Naive thymus-derived CD4-positive, alpha-beta T cell (primary cell): ENCODE measurements at regions of chr7 and their contacts with region 1.

Region 1: GRCh38 chr7:87876040-87876868 is at the starts of genes DBF4 and SLC25A40:
- DNase-seq: peak; percentile 88 to 98 (median 95)
- ATAC-seq: peak; percentile 95
- H3K4me3 ChIP-seq: peak within 1 kb of the TSS; percentile 93
- H3K4me3 Mint-ChIP-seq: peak within 1 kb of the TSS; percentile 69 to 96 (median 93)
- H3K27ac ChIP-seq: peak within 1 kb of the TSS; percentile 92
- H3K27ac Mint-ChIP-seq: peak within 1 kb of the TSS; percentile 82 to 98 (median 97)
- H3K4me1 ChIP-seq: peaks cover 6 to 13% of the 10 kb centered on the region in 2 donors
- H3K4me1 Mint-ChIP-seq: peaks cover 27 to 64% (median 54%) of the 10 kb centered on the region in 7 donors
- H3K27me3 ChIP-seq: no peaks in the 10 kb centered on the region
- H3K27me3 Mint-ChIP-seq: no peaks in the 10 kb centered on the region
- total RNA-seq, gene DBF4: 31.2 to 46.5 (median 38.4) TPM
- total RNA-seq, gene SLC25A40: 15.2 to 50.2 (median 27.5) TPM

Region 2: GRCh38 chr7:87219545-87220025 is 656.7 kb before region 1 on chr7 and contains the start of gene TMEM243:
- CTCF ChIA-PET with region 1: no interaction called
- POLR2A ChIA-PET with region 1: no interaction called
- intact Hi-C with region 1: loop called (anchors 1 to 2 kb)
- DNase-seq: peak; percentile 72 to 91 (median 89)
- ATAC-seq: peak; percentile 81
- H3K4me3 ChIP-seq: peak within 1 kb of the TSS; percentile 90
- H3K4me3 Mint-ChIP-seq: peak within 1 kb of the TSS; percentile 96 to 100 (median 99)
- H3K27ac ChIP-seq: peak within 1 kb of the TSS; percentile 96
- H3K27ac Mint-ChIP-seq: peak within 1 kb of the TSS; percentile 94 to 100 (median 99)
- H3K4me1 ChIP-seq: peaks cover 22 to 41% of the 10 kb centered on the region in 2 donors
- H3K4me1 Mint-ChIP-seq: peaks cover 18 to 44% (median 32%) of the 10 kb centered on the region in 7 donors
- H3K27me3 ChIP-seq: no peaks in the 10 kb centered on the region
- H3K27me3 Mint-ChIP-seq: peaks cover 0 to 12% (median 0%) of the 10 kb centered on the region in 5 donors
- total RNA-seq, gene TMEM243: 50.0 to 153 (median 125) TPM

Region 3: DNA sequence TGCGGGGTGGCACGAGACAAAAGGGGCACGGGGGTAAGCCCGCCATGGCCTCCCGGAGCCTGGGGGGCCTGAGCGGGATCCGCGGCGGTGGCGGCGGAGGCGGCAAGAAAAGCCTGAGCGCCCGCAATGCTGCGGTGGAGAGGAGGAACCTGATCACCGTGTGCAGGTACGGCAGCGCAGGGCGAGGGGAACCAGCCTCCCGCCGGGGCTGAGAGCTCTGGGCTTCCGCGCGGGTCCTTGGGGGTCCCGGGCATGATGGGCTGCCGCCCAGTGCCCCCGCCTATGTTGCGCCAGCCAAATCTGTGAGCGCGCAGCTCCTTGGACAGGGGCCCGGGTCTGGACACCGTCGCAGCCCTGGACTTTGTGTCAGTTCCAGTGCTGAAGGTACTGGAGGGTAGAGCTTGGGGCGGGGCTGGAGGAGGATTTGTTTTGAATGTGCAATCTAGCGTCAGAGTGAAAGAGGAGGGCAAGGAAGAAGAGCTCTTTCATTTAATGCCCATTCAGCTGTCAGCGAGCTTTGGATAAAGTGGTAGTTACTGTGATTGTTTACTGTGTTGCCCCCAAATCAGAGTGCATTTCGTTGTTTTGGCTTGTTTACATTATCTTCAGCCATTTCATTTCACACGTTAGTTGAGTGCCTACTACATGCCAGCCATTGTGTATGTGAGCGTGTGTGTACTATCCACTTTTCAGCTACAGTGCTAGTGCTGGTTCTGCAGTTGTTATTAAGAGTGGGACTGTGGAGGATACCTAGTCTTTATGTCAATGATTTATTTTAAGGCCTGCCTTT is 247.3 kb before region 1 on chr7:
- CTCF ChIA-PET with region 1: no interaction called
- POLR2A ChIA-PET with region 1: no interaction called
- intact Hi-C with region 1: loop called (anchors 1 kb)
- DNase-seq: peak in 8 of 9 donors; percentile 15 to 51 (median 36)
- ATAC-seq: peak; percentile 29
- H3K4me3 ChIP-seq: peak overlapping the region; percentile 64
- H3K4me3 Mint-ChIP-seq: peak overlapping the region; percentile 74 to 92 (median 83)
- H3K27ac ChIP-seq: peak overlapping the region; percentile 38
- H3K27ac Mint-ChIP-seq: peak overlapping the region in 5 of 9 donors; percentile 30 to 83 (median 54)
- H3K4me1 ChIP-seq: peaks cover 0 to 5% of the 10 kb centered on the region in 2 donors
- H3K4me1 Mint-ChIP-seq: peaks cover 7 to 14% (median 10%) of the 10 kb centered on the region in 7 donors
- H3K27me3 ChIP-seq: no peaks in the 10 kb centered on the region
- H3K27me3 Mint-ChIP-seq: peaks cover 4 to 32% (median 21%) of the 10 kb centered on the region in 5 donors

Region 4: DNA sequence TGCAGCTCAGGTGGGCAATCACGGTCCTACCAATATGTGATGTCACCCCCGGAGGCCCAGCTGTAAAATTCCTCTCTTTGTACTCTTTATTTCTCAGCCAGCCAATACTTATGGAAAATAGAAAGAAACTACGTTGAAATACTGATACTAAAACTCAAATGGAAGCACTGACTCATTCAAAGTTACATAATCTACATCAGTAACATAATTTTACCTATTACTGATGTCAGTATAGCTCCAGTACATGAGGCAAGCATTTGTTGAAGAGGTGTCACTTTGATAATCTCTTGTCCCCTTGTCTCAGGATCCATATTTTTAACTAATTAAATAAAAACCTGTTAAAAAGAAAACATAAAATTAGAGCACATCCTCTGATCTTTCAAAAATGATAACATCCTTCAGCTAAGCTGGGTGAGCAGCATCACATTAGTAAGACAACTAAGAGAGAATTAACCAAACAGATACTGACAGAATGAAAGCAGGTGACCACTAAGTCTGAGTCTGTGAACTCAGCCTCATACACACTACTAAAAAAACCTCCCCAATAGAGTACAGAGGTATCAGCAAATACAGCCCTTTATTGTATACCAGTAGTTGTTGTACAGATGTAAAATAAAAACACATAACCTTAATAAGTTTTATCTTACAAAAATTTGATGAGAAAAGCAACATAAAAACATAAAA is 17.7 kb before region 1 on chr7:
- CTCF ChIA-PET with region 1: no interaction called
- POLR2A ChIA-PET with region 1: interaction called, 4 read pairs
- intact Hi-C with region 1: loop called in 1 of 2 experiments (anchors 2 kb)
- DNase-seq: no peak
- ATAC-seq: no peak
- H3K4me3 ChIP-seq: no peak overlapping the region
- H3K4me3 Mint-ChIP-seq: no peak overlapping the region
- H3K27ac ChIP-seq: no peak overlapping the region
- H3K27ac Mint-ChIP-seq: peak overlapping the region in 1 of 9 donors; percentile 76
- H3K4me1 ChIP-seq: no peaks in the 10 kb centered on the region
- H3K4me1 Mint-ChIP-seq: peaks cover 0 to 18% (median 6%) of the 10 kb centered on the region in 7 donors
- H3K27me3 ChIP-seq: no peaks in the 10 kb centered on the region
- H3K27me3 Mint-ChIP-seq: no peaks in the 10 kb centered on the region

Region 5: GRCh38 chr7:87933945-87934698 is 57.9 kb after region 1 on chr7 and contains the start of gene ADAM22:
- CTCF ChIA-PET with region 1: no interaction called
- POLR2A ChIA-PET with region 1: interaction called, 3 read pairs
- intact Hi-C with region 1: loop called (anchors 1 kb)
- DNase-seq: peak; percentile 49 to 80 (median 74)
- ATAC-seq: peak; percentile 96
- H3K4me3 ChIP-seq: peak within 1 kb of the TSS; percentile 80
- H3K4me3 Mint-ChIP-seq: peak within 1 kb of the TSS; percentile 84 to 93 (median 91)
- H3K27ac ChIP-seq: peak within 1 kb of the TSS; percentile 19
- H3K27ac Mint-ChIP-seq: peak within 1 kb of the TSS in 7 of 9 donors; percentile 13 to 82 (median 65)
- H3K4me1 ChIP-seq: peaks cover 4 to 6% of the 10 kb centered on the region in 2 donors
- H3K4me1 Mint-ChIP-seq: peaks cover 0 to 21% (median 12%) of the 10 kb centered on the region in 7 donors
- H3K27me3 ChIP-seq: no peaks in the 10 kb centered on the region
- H3K27me3 Mint-ChIP-seq: peaks cover 0 to 54% (median 4%) of the 10 kb centered on the region in 5 donors
- total RNA-seq, gene ADAM22: 1.1 to 7.1 (median 3.1) TPM

Region 6: DNA sequence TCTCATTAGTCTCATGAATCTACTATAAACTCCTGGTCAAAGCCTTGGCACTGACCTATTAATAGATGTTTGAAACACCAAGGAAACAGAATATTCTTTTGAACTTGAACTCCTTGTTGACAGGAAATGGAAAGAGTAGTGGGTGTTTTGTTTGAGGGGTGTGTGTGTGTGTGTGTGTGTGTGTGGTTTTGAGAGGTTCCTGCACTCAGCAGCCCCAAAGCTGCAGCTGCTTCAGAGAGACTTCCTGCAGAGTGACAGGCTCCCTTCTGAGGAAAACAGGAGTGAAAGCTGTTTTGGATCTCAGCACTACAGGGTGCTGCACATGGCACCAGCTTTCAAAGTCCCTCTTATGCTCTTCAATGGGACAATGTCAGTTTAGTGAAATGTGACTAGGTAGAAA is 1731.5 kb after region 1 on chr7:
- CTCF ChIA-PET with region 1: no interaction called
- POLR2A ChIA-PET with region 1: no interaction called
- intact Hi-C with region 1: loop called in 1 of 2 experiments (anchors 10 kb)
- DNase-seq: peak in 8 of 9 donors; percentile 43 to 76 (median 66)
- ATAC-seq: peak; percentile 68
- H3K4me3 ChIP-seq: no peak overlapping the region
- H3K4me3 Mint-ChIP-seq: peak overlapping the region; percentile 61 to 78 (median 68)
- H3K27ac ChIP-seq: peak overlapping the region; percentile 66
- H3K27ac Mint-ChIP-seq: peak overlapping the region; percentile 76 to 96 (median 85)
- H3K4me1 ChIP-seq: peaks cover 0 to 65% of the 10 kb centered on the region in 2 donors
- H3K4me1 Mint-ChIP-seq: peaks cover 27 to 91% (median 85%) of the 10 kb centered on the region in 7 donors
- H3K27me3 ChIP-seq: no peaks in the 10 kb centered on the region
- H3K27me3 Mint-ChIP-seq: peaks cover 0 to 2% (median 0%) of the 10 kb centered on the region in 5 donors